Activated CD4-positive, alpha-beta T cell treated with anti-CD3 and anti-CD28 coated beads, Interleukin-2, amount 10 ng/mL, durations not matched to agents 24 days and 14 days (primary cell): ENCODE measurements at regions of chr4 and their contacts with region 1.

Region 1: GRCh38 chr4:47914220-47914925 is at the start of gene NFXL1:
- DNase-seq: peak; percentile 98
- H3K4me3 Mint-ChIP-seq: peak within 1 kb of the TSS; percentile 84
- H3K27ac Mint-ChIP-seq: peak within 1 kb of the TSS; percentile 91
- H3K4me1 Mint-ChIP-seq: peaks cover 25% of the 10 kb centered on the region
- H3K27me3 Mint-ChIP-seq: peaks cover 7% of the 10 kb centered on the region
- total RNA-seq, gene NFXL1: 11.2 and 15.0 TPM in 2 replicates

Region 2: DNA sequence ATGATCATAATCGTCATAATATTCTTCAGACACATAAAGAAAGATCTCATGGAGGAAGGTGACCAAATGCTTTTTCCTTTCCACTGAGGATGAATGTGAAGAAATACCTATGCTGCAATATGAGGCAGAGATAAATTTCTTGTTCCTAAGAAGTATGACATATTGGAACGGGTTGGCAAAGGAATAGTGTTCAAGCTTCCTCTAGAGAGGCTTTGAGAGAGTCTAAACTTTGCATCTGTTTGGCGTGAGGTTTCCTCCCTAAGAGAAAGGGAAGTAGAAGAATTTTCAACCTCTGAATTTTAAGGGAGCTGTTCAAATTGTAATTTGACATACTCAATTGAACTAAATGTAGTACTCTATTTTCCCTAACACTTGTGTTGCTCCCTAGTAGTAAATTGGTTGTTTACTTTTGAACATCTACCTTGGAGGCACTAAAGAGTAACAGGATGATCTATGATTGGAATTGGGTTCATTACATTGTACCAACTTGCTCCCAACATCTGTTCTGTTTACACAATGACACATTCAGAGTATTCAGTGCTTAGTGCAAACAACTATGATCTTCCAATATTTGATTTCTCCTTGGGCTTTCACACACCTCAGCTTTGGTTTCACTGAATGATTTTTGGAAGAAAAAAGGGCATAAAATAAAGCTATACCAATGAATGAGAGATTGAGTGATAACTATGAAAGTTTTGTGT is 198.5 kb before region 1 on chr4:
- intact Hi-C with region 1: no loop called
- DNase-seq: no peak
- H3K4me3 Mint-ChIP-seq: no peak overlapping the region
- H3K27ac Mint-ChIP-seq: no peak overlapping the region
- H3K4me1 Mint-ChIP-seq: no peaks in the 10 kb centered on the region
- H3K27me3 Mint-ChIP-seq: peaks cover 28% of the 10 kb centered on the region

Region 3: GRCh38 chr4:47873877-47874541 is 40.4 kb before region 1 on chr4:
- intact Hi-C with region 1: loop called (anchors 5 kb)
- DNase-seq: no peak
- H3K4me3 Mint-ChIP-seq: no peak overlapping the region
- H3K27ac Mint-ChIP-seq: peak overlapping the region; percentile 43
- H3K4me1 Mint-ChIP-seq: peaks cover 9% of the 10 kb centered on the region
- H3K27me3 Mint-ChIP-seq: no peaks in the 10 kb centered on the region

Region 4: DNA sequence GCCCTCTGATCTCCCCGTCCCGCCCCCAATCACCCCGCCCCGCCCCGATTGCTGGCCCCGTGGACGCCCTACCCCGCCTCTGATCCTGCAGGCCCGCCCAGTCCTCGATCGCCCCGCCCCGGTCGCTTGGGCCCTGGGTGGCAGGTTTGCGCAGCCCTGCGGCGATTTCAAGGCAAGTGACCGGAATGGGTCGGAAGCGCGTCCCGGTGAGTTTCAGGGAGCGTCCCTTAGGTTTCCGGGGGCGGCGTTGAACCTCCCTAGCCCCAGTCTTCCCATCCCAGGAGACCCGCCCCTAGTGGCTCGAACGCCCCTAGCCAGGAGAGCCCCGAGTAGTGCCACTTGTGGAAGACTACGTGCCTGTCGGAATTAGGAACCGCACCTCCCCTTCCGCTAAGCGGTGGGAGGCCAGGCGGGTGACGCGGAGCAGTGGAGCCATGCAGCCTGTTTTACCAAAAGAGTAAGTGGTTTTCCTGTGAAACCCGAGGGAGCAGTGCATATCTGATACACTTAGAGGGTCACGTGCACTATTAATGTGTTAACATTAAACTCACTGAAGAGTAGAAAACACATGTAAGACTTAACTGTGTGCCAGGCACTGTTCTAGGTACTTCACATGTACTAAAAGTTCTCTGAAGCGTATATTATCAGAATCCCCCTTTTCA is 355.6 kb after region 1 on chr4:
- intact Hi-C with region 1: loop called (anchors 10 kb)
- DNase-seq: peak; percentile 95
- H3K4me3 Mint-ChIP-seq: peak overlapping the region; percentile 97
- H3K27ac Mint-ChIP-seq: peak overlapping the region; percentile 88
- H3K4me1 Mint-ChIP-seq: peaks cover 20% of the 10 kb centered on the region
- H3K27me3 Mint-ChIP-seq: no peaks in the 10 kb centered on the region